Activated CD4-positive, alpha-beta memory T cell treated with anti-CD3 and anti-CD28 coated beads, Interleukin-2, amount 10 ng/mL, durations not matched to agents 7 days and 5 days (primary cell): ENCODE measurements at regions of chr17 and their contacts with region 1.

Region 1: GRCh38 chr17:27236717-27237315 is 57.1 kb upstream of the WSB1 start:
- DNase-seq: peak; percentile 77
- H3K4me3 Mint-ChIP-seq: no peak overlapping the region
- H3K27ac Mint-ChIP-seq: no peak overlapping the region
- H3K4me1 Mint-ChIP-seq: peaks cover 33% of the 10 kb centered on the region
- H3K27me3 Mint-ChIP-seq: peaks cover 2% of the 10 kb centered on the region

Region 2: DNA sequence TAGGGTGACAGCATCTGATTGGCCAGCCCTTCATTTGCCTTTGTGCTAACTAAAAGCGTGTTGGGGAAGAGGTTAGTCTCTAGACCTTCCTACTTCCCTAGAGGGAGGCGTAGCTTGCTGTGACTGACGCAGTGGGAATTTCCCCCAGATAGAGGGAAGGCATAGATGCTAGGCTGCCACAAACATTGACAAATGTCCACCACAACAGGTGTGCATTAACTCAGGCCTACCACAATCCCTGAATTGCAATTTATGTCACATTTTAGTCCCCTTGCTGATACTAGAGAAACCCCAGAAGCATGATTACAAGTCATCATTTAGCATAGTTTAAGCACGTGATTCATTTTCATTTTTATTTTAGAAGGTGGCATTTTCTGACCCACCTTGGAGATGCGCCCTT is 19.2 kb before region 1 on chr17:
- CTCF ChIA-PET with region 1: interaction called, 18 read pairs
- POLR2A ChIA-PET with region 1: interaction called, 4 read pairs
- DNase-seq: no peak
- H3K4me3 Mint-ChIP-seq: no peak overlapping the region
- H3K27ac Mint-ChIP-seq: peak overlapping the region; percentile 75
- H3K4me1 Mint-ChIP-seq: peaks cover 29% of the 10 kb centered on the region
- H3K27me3 Mint-ChIP-seq: peaks cover 2% of the 10 kb centered on the region

Region 3: DNA sequence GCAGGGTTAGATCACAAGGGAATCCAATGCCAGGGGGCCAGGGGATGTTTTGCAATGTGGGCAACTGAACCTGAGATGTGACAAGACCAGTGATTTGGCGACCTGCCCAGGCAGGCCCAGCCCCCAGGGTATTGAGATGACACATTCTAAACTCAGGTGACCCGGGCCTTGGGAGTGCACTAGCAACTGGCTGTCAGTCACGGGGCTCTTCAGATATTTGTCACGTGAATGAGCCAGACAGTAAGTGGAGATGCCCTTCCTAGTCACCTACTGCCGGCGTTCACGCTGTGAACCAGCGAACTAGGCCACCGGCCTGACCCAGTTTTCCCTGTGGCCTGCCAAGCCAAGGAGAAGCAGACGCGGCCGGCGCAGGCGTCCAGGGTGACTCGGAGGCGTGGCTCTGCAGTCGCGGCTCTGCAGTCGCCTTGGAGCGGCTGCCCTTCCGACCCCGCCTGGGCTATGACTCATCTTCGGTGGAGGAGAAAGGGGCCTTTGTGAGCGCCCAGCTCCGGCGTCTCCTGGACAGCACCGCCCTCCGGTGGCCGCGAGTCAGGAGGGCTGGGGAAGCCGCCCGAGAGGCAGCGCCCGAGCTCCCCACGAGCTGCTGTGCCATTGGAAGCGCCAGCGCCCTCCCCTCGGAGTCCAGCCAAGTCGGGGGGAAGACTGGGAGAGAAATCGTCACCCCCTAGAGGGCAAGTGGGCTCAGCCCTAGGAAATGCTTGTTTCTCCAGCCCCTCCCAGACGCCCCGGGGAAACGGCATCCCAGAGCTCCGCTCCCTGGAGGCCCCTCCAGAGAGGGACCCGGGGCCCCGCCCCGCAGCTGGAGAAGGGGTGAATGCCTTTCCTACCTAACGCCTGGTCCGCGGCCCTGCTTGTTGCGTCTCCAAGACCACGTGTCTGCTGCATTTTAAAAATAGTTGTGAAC is 95.9 kb after region 1 on chr17:
- CTCF ChIA-PET with region 1: interaction called, 107 read pairs
- POLR2A ChIA-PET with region 1: interaction called, 8 read pairs
- DNase-seq: peak; percentile 92
- H3K4me3 Mint-ChIP-seq: peak overlapping the region; percentile 65
- H3K27ac Mint-ChIP-seq: peak overlapping the region; percentile 35
- H3K4me1 Mint-ChIP-seq: peaks cover 23% of the 10 kb centered on the region
- H3K27me3 Mint-ChIP-seq: no peaks in the 10 kb centered on the region

Region 4: DNA sequence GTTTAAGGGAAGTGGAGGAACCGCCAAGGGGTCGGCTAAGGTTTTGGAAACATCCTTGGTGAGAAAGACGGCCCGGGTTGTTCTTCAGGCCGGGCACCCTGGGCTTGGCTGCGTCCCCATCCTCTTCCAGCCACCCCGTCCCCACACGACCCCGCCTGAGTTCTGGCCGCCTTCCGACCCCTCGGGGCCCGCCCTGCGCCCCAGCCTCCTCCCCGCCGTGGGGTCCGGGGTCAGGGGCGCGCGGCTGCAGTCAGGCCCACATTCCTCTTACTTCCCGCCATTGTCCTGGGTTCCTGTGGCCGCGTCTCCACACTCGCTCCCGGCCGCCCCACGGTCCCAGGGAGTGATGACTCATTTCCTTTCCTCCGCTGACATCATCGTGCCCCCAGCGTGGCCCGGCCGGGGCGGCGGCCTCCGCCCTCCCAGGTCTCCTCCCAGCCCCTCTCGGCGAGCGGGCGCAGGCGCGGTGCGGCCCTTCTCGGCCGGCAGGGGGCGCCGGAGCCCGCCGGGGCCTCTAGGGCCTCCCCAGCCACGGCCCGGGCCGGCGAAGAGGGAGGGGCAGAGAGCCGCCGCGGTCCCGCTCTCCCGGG is 116.7 kb after region 1 on chr17:
- CTCF ChIA-PET with region 1: interaction called, 15 read pairs
- POLR2A ChIA-PET with region 1: interaction called, 4 read pairs
- DNase-seq: peak; percentile 90
- H3K4me3 Mint-ChIP-seq: peak overlapping the region; percentile 84
- H3K27ac Mint-ChIP-seq: peak overlapping the region; percentile 81
- H3K4me1 Mint-ChIP-seq: peaks cover 38% of the 10 kb centered on the region
- H3K27me3 Mint-ChIP-seq: no peaks in the 10 kb centered on the region

Region 5: DNA sequence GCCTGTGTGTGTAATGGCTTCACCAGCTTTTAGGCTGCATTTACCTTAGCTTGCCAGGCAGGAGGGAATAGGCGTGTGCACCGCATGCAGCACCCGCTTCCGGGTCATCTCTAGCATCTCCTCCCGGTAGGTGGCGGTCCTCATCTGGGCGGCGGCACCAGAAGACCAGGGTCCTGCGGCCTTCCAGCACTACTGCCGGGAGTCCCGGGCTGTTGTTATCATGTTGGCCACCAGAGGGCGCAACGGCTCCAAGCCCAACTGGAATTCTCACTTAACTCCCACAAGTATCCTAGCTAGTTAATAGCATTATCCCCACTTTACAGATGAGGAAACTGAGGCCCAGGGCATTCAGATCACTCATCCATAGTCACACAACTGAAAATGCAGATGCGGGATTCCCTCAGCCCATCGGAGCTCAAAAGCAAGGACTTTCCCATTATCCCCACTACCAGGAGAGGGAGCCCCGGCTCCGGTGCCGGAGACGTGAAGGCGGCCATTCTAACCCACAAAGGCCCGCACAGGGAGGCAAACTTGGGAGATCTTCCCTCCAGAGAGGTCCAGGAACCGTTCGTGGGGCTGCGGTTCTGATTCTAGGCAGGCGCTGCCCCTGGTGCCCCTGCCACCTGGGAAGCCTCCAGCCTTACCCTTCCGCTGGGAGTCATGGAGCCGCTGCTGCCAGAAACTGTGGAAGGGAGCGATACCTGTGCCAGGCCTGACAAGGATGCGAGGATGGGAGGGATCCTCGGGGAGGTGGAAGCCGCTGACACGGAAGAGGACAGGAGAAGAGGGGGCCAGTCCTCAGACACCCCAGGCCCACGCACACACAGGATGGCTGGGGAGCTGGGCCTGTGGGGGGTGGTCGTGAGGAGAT is 418.1 kb after region 1 on chr17:
- CTCF ChIA-PET with region 1: interaction called, 17 read pairs
- POLR2A ChIA-PET with region 1: no interaction called
- DNase-seq: peak; percentile 66
- H3K4me3 Mint-ChIP-seq: no peak overlapping the region
- H3K27ac Mint-ChIP-seq: no peak overlapping the region
- H3K4me1 Mint-ChIP-seq: peaks cover 5% of the 10 kb centered on the region
- H3K27me3 Mint-ChIP-seq: peaks cover 2% of the 10 kb centered on the region